BJ (cell line): ENCODE measurements at regions of chr3 and their contacts with region 1.

Region 1: DNA sequence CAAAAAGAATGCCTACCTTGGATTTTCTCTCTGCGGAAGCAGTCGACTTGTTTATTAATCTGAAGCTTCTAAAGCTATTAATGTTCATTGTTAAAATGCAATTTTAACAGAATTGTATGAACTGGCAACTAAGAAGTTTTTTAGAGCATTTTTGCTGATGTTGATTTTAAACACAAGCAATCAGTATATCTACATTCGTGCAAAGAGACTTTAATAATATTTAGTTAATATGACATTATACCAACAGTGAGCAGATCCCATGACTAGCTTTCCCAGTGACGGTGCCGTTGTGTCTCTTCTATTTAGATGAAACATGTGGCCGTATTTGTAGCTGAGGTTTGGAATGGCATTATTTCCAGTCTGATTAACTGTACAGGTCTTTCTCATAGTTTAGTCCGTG is 88.0 kb downstream of the PEX5L start:
- DNase-seq: no peak
- H3K4me3 ChIP-seq: no peak overlapping the region
- H3K27me3 ChIP-seq: no peaks in the 10 kb centered on the region
- CTCF ChIP-seq: no peak

Region 2: GRCh38 chr3:179929091-179929529 is 19.6 kb before region 1 on chr3:
- CTCF ChIA-PET with region 1: interaction called, 11 read pairs
- POLR2A ChIA-PET with region 1: no interaction called
- DNase-seq: no peak
- H3K4me3 ChIP-seq: no peak overlapping the region
- H3K27me3 ChIP-seq: no peaks in the 10 kb centered on the region; the same call in 1 of the 2 replicates
- CTCF ChIP-seq: peak; percentile 82